GM10248 (cell line): ENCODE measurements at regions of chr17 and their contacts with region 1.

Region 1: GRCh38 chr17:35849469-35850348 is 19.0 kb downstream of the HEATR9 start:
- DNase-seq: peak; percentile 61
- CTCF ChIP-seq: peak; percentile 78

Region 2: DNA sequence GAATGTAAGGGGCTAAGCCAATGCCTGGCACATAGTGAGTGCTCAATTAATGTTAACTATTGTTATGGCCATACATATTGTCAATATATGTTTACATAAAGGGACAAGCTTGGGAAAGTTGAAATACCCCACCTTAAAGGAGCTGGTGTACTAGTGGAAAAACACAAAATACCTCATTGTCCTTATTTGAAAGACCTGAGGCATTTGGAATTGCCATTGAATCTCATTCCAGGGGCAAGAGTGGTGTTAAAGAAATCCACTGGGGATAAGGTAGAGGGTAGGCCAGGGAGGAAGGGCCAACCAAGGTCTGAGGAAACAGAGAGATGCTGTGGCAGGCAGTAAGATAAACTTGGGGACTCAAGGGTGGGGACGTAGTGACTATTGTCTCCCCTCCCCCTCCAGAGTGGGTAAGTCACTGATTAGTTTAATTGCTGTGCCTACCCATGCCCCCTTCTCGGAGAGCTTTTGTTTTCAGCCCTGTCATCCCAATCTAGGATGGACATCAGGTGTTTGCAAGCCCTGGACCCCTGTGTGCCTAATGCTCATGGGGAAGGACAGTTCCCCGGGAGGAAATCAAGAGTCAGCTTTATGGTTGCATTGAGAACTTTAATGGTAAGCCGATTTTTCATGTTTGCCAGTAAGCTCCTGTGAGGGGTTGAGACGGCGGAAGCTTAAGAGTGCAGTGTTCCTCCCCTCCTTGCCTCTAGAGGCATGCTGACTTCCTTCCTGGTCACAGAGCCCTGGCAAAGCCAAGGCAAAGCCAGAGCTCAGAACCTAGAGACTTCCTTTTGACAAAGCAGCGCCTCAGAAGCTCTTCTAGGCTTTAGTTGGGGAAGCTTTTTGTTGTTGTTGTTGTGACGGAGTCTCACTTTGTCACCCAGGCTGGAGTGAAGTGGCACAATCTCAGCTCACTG is 21.5 kb after region 1 on chr17:
- CTCF ChIA-PET with region 1: interaction called, 30 read pairs
- POLR2A ChIA-PET with region 1: no interaction called
- DNase-seq: no peak
- CTCF ChIP-seq: no peak

Region 3: GRCh38 chr17:35879773-35880654 is 30.3 kb after region 1 on chr17 and contains the start of gene CCL5:
- CTCF ChIA-PET with region 1: interaction called, 24 read pairs
- POLR2A ChIA-PET with region 1: no interaction called
- DNase-seq: peak; percentile 87
- CTCF ChIP-seq: no peak

Region 4: GRCh38 chr17:35915153-35915969 is 65.7 kb after region 1 on chr17:
- CTCF ChIA-PET with region 1: interaction called, 17 read pairs
- POLR2A ChIA-PET with region 1: no interaction called
- DNase-seq: no peak
- CTCF ChIP-seq: no peak